ENCODE measurements at regions of chr6 and their contacts with region 1.

Region 1: GRCh38 chr6:131532580-131533039 is 40.4 kb upstream of the ARG1 start:
- H3K4me3 Mint-ChIP-seq: no peak overlapping the region
- H3K27ac Mint-ChIP-seq: no peak overlapping the region
- H3K4me1 Mint-ChIP-seq: no peaks in the 10 kb centered on the region
- H3K27me3 Mint-ChIP-seq: no peaks in the 10 kb centered on the region

Region 2: GRCh38 chr6:130322673-130323268 is 1209.8 kb before region 1 on chr6:
- intact Hi-C with region 1: loop called (anchors 2 kb)
- H3K4me3 Mint-ChIP-seq: no peak overlapping the region
- H3K27ac Mint-ChIP-seq: no peak overlapping the region
- H3K4me1 Mint-ChIP-seq: no peaks in the 10 kb centered on the region
- H3K27me3 Mint-ChIP-seq: no peaks in the 10 kb centered on the region

Region 3: DNA sequence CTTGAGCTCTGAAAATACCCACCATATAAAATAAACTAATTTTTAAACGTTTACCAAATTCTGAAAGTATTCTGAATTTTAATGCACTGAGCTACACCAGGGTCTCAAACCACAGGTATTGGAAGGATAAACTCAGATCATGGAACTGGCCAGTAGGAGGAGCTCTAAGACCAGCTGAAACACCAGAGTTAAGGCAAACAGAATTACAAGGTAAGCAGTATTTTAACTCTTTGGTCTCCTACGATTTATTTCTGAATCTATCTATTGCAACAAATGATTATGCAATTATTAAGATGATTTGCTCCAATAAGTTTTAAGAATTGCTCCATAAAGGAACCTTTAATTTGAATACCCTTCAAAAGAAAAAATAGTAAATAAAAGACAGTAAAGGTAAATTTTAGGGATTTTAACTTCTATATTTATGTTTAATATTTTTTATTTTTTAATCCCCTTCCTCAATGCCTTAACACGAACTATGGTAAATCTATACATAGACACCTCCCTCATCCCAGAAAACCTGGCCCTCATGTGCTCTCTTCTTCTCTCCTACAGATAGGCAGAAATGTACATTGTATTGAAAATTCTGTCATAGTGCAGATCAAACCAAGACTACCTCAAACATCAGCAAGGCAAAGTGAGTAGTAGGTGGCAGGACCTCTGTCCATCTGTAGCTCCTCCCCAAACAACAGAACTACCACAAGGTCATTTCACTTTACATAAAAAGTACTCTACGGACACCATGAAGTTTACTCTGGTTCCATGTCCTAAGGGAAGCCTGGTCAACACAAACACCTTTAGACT is 647.0 kb before region 1 on chr6:
- intact Hi-C with region 1: loop called (anchors 2 kb)
- H3K4me3 Mint-ChIP-seq: no peak overlapping the region
- H3K27ac Mint-ChIP-seq: no peak overlapping the region
- H3K4me1 Mint-ChIP-seq: peaks cover 30% of the 10 kb centered on the region
- H3K27me3 Mint-ChIP-seq: no peaks in the 10 kb centered on the region

Region 4: GRCh38 chr6:131116749-131117360 is 415.8 kb before region 1 on chr6:
- intact Hi-C with region 1: loop called (anchors 5 kb)
- H3K4me3 Mint-ChIP-seq: no peak overlapping the region
- H3K27ac Mint-ChIP-seq: no peak overlapping the region
- H3K4me1 Mint-ChIP-seq: peaks cover 12% of the 10 kb centered on the region
- H3K27me3 Mint-ChIP-seq: no peaks in the 10 kb centered on the region

Region 5: GRCh38 chr6:131182991-131183425 is 349.6 kb before region 1 on chr6:
- intact Hi-C with region 1: loop called (anchors 1 kb)
- H3K4me3 Mint-ChIP-seq: no peak overlapping the region
- H3K27ac Mint-ChIP-seq: peak overlapping the region; percentile 59
- H3K4me1 Mint-ChIP-seq: peaks cover 5% of the 10 kb centered on the region
- H3K27me3 Mint-ChIP-seq: no peaks in the 10 kb centered on the region

Region 6: DNA sequence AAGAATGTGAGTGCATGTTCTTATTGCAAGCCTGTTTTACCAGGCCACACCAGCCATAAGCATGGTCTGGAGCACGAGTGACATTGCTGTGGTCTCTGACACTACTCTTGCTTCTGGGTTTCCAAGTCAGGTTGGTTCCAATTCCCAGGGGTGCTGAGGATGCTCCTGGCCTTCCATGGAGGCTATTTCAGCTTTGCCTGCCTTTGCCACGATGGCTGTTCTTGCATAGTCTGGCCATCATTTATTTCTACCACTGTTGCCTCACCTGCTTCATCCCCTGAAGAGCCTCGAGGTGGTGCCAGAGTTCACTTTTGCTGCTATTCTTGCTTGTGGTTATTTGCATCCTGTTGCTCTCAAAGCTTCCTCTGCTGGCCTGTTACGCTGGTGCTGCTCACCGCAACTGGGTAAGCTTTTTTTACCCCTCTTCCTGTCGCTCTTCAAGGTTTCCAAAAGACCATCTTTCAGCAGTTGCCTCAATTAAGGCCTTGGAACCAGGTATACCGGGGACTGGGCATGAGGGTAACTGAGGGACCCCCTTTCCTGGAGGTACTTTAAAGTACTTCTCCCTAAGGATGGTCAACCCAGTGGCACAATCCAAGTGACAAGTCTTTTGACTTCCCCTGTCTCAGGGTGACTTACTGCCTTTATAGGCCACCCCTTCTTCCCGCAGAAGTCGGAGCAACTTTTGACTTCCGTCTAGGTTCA is 332.9 kb before region 1 on chr6:
- intact Hi-C with region 1: loop called (anchors 5 kb)
- H3K4me3 Mint-ChIP-seq: no peak overlapping the region
- H3K27ac Mint-ChIP-seq: no peak overlapping the region
- H3K4me1 Mint-ChIP-seq: peaks cover 8% of the 10 kb centered on the region
- H3K27me3 Mint-ChIP-seq: no peaks in the 10 kb centered on the region